Heart right ventricle (tissue), 16 donors: ENCODE measurements at regions of chr12 and their contacts with region 1.

Region 1: DNA sequence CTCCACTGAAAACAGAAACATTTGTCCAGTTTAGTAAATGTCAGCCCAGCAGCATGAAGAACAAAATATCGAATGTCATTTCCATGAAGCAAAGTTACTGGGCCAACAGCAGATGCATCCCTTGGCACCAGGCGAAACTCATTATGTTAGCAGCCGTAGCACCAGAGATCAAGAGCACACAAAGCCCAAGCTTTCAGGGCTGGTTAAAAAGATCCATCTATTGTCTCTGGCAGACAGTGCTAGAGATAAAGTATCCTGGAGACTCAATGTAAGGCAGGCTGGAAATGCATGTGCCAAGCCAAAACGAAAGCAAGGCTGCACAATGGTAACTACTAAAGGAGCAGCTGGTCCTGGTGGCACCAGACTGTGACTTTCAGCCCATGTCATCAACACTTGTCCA is 120.3 kb upstream of the PLEKHG7 start:
- DNase-seq: no peak
- ATAC-seq: no peak
- H3K4me3 ChIP-seq: no peak overlapping the region
- H3K27ac ChIP-seq: no peak overlapping the region
- H3K4me1 ChIP-seq: no peaks in the 10 kb centered on the region
- H3K27me3 ChIP-seq: no peaks in the 10 kb centered on the region
- CTCF ChIP-seq: no peak

Region 2: DNA sequence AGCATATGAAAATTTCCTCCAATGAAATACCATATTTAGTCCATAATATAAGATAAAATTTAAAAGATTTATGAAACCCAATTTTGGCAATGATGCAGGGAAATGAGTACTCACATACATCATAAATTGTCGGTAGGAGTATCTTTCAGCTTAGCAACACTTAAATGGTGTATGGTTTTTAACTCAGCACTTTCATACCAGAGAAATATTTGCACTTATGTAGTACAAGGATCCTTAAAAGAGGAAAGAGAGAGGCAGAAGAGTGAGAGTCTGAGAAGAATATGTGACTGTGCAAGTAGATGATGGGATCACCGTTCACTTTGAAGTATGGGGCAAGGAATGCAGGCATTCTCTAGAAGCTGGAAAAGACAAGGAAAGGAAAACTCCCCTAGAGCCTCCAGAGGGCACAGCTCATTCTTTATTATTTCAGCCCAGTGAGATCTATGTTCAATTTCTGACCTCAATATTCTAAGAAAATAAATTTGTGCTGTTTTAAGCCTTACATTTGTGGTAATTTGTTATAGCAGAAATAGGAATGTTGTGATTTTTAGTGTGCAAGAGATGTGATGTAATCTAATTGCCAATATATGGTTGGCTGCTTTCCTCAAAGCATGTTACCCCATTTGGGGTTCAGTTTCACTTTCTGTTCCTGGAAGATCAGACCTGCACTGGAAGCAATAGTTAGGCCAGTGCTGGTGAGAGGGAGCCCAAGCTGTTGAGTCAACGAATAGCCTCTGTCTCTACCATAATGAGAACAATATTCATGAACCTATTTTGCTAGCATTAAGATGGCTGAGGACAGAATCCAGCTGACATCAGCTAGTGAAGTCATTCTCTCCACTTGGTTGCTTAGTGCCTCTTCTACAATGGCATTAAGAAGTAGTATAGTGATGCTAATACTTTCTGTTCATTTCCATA is 1020.3 kb before region 1 on chr12:
- intact Hi-C with region 1: loop called in 1 of 10 experiments (anchors 10 kb)
- DNase-seq: no peak
- ATAC-seq: no peak
- H3K4me3 ChIP-seq: no peak overlapping the region
- H3K27ac ChIP-seq: peak overlapping the region in 1 of 10 donors; percentile 42
- H3K4me1 ChIP-seq: peaks cover 0 to 3% (median 0%) of the 10 kb centered on the region in 9 donors
- H3K27me3 ChIP-seq: no peaks in the 10 kb centered on the region
- CTCF ChIP-seq: no peak